Gastrocnemius medialis (tissue), 4 donors: ENCODE measurements at regions of chr7 and their contacts with region 1.

Region 1: GRCh38 chr7:55552320-55553023 is 19.8 kb downstream of the VOPP1 start:
- DNase-seq: peak; percentile 66 to 80
- ATAC-seq: peak; percentile 88
- H3K4me3 ChIP-seq: peak overlapping the region; percentile 37 to 53 (median 45)
- H3K27ac ChIP-seq: peak overlapping the region; percentile 90 to 96 (median 92)
- H3K4me1 ChIP-seq: peaks cover 87 to 89% of the 10 kb centered on the region in 2 donors
- H3K27me3 ChIP-seq: no peaks in the 10 kb centered on the region
- CTCF ChIP-seq: no peak
- POLR2A ChIP-seq: peak; percentile 9 to 21

Region 2: DNA sequence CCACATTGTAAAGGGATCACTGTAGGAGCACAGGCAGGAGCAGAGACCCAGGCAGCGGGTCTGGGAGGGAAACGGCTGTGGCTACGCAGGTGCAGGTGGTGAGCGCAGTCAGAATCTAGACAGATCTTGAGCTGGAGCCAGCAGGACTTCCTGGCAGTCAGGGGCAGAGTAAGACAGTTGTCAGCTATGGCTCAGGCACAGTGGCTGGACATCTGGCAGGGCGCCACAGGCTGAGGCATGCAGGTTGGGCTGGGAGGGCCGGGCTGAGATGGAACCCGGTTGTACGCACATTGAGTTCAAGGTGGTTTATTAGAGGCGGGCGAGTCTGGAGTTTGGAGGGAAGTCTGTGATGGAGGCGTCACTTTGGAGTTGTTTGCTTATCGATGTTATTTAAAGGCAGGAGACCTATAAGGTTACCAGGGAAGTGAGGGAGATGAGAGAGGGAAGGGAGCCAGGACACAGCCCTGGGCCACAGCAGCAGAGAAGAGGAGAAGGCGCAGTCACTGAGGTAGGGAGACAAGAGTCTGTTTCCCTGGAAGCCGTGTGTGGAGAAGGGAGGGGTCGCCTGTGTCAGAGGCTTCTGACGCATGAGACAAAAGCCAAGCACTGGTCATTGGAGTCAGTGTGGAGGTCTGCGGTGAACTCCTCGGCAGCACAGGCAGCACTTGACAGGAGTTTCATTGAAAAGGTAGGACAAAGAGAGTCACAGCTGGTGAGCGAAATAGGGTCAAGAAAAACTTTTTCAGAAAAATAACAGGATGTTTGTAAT is 113.5 kb before region 1 on chr7:
- in situ Hi-C with region 1: no loop called
- intact Hi-C with region 1: no loop called
- DNase-seq: peak; percentile 34 to 71
- ATAC-seq: peak; percentile 51 to 59
- H3K4me3 ChIP-seq: no peak overlapping the region
- H3K27ac ChIP-seq: no peak overlapping the region
- H3K4me1 ChIP-seq: peaks cover 16 to 22% of the 10 kb centered on the region in 2 donors
- H3K27me3 ChIP-seq: no peaks in the 10 kb centered on the region
- CTCF ChIP-seq: no peak
- POLR2A ChIP-seq: no peak

Region 3: DNA sequence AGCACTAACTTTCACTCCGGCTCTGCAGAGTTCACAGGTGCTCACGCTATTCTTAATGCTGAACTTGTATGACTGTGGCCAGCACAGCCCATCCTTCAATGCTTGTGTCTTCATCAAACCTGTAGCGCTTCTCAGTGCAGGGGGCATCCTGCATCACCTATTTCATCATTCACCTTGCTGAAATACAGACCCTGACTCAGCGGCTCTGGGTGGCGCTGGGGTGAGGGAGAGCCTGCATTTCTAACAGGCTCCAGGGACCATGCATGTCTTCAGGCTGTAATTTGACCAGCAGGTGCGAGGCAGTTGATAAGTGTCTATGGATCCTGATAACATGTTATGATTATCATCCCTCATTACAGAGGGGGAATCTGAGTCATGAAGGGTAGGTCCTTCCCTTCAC is 69.4 kb before region 1 on chr7:
- in situ Hi-C with region 1: no loop called
- intact Hi-C with region 1: no loop called
- DNase-seq: no peak
- ATAC-seq: no peak
- H3K4me3 ChIP-seq: no peak overlapping the region
- H3K27ac ChIP-seq: no peak overlapping the region
- H3K4me1 ChIP-seq: peaks cover 13 to 16% of the 10 kb centered on the region in 2 donors
- H3K27me3 ChIP-seq: no peaks in the 10 kb centered on the region
- CTCF ChIP-seq: no peak
- POLR2A ChIP-seq: no peak

Region 4: DNA sequence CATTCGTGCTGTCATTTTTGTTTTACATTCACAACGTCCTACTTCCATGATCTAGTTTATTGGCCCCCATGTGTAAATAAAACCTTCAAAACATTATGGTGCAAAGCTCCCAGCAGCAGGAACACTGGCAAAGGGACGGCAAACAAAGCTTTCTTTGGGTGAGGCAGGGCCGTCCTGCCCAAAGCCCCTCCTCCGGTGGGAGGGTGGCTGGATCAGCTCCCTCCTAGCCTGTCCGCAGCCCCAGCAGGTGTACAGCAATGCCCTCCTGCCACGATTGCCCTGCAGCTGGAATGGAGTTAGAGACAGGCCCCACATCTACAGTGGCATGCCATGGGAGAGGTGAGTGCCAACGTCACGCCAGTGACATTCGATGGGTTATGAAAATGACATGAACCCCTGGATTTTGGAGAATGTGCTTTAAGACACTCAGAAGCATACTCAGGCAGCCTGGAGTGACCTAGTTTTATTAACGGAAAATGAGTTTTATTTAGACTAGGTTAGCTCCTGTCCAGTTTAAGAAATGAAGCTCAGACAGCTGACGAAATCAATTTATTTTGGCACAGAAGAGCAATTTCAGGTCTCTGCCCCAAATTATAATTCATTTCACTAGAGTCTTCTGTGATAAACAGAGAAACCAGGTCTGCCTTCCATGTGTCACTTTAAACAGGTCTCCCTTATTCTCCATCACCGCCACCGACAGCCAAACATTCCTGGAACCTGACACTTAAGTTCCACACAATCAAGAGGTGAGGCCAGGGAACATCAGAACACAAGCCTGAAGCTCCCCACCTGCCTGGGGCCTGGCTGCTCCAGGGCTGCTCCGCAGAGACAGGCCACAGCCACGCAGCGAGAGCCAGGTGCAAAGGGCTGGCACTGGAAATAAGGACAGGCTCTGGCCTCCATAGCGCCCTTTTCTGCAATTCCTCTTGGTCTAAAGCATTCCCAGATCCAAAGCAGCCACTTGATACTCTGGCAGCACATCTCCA is 30.3 kb before region 1 on chr7:
- in situ Hi-C with region 1: no loop called
- intact Hi-C with region 1: no loop called
- DNase-seq: peak in 1 of 2 donors; percentile 62
- ATAC-seq: peak; percentile 3 to 51
- H3K4me3 ChIP-seq: no peak overlapping the region
- H3K27ac ChIP-seq: peak overlapping the region; percentile 39 to 65 (median 42)
- H3K4me1 ChIP-seq: peaks cover 58 to 66% of the 10 kb centered on the region in 2 donors
- H3K27me3 ChIP-seq: no peaks in the 10 kb centered on the region
- CTCF ChIP-seq: no peak
- POLR2A ChIP-seq: no peak

Region 5: GRCh38 chr7:55534175-55534915 is 18.1 kb before region 1 on chr7:
- in situ Hi-C with region 1: no loop called
- intact Hi-C with region 1: no loop called
- DNase-seq: peak; percentile 36 to 53
- ATAC-seq: peak; percentile 10 to 31
- H3K4me3 ChIP-seq: no peak overlapping the region
- H3K27ac ChIP-seq: peak overlapping the region; percentile 57 to 63 (median 63)
- H3K4me1 ChIP-seq: peaks cover 57 to 79% of the 10 kb centered on the region in 2 donors
- H3K27me3 ChIP-seq: no peaks in the 10 kb centered on the region
- CTCF ChIP-seq: no peak
- POLR2A ChIP-seq: no peak

Region 6: GRCh38 chr7:55970978-55971377 is 418.5 kb after region 1 on chr7:
- in situ Hi-C with region 1: no loop called
- intact Hi-C with region 1: loop called (anchors 5 kb)
- DNase-seq: peak; percentile 62 to 83
- ATAC-seq: peak; percentile 65 to 72
- H3K4me3 ChIP-seq: peak overlapping the region; percentile 21 to 40 (median 34)
- H3K27ac ChIP-seq: peak overlapping the region; percentile 96 to 98 (median 97)
- H3K4me1 ChIP-seq: peaks cover 72 to 91% of the 10 kb centered on the region in 2 donors
- H3K27me3 ChIP-seq: no peaks in the 10 kb centered on the region
- CTCF ChIP-seq: no peak
- POLR2A ChIP-seq: peak; percentile 53 to 73